Posterior vena cava (tissue), 2 donors: ENCODE measurements at regions of chr10 and their contacts with region 1.

Region 1: GRCh38 chr10:124194199-124194824 is 100.9 kb upstream of the CHST15 start:
- DNase-seq: no peak

Region 2: GRCh38 chr10:124249812-124250432 is 55.6 kb after region 1 on chr10:
- intact Hi-C with region 1: no loop called
- DNase-seq: no peak

Region 3: GRCh38 chr10:124754227-124754626 is 559.9 kb after region 1 on chr10:
- intact Hi-C with region 1: loop called in 1 of 2 experiments (anchors 5 kb)
- DNase-seq: no peak

Region 4: DNA sequence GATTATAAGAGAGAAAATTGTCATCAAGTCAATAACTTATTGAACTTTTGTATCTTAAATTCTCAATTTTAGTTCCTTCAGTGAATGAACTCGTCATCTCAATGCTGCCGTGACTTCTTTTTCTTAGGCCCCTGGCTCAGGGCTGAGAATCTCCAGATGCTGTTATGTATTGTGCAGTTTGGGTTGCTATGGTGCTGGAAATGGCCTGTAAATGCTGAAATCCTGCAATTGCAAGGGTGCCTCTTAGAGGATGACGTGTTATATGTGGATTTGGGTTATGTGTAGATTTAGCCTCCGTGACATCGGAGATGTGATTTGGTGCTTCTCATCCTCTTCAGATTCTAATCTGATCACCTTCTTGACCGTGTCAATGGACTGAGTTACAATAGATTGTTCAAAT is 691.9 kb after region 1 on chr10:
- intact Hi-C with region 1: no loop called
- DNase-seq: no peak